ENCODE measurements at regions of chr9 and their contacts with region 1.

Region 1: DNA sequence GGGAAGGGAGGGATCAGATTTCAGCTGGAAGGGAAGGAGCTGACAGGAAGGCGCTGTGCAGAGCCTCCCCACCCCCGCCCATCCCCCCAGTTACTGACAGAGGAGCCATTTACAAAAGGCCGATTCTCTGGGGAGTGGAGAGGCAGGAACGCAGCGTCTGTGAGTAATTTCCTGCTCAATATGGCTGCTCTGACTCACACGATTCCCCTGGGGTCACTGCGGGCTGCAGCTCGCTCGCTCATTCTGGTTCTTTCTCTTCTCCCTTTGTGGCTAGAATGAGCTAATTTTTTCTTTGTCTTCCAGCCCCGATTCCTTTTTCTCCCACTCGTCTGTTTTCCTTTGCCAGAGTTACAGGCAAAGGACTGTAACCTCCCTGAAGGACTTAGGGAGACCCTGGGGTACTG is 28.8 kb downstream of the PTPA start:
- DNase-seq: peak; percentile 70 to 92 (median 73)
- H3K4me3 ChIP-seq: peak overlapping the region; percentile 78 to 82
- H3K4me3 Mint-ChIP-seq: peak overlapping the region; percentile 86 to 95 (median 90)
- H3K27ac ChIP-seq: peak overlapping the region; percentile 90
- H3K27ac Mint-ChIP-seq: peak overlapping the region; percentile 90 to 99 (median 92)
- H3K4me1 ChIP-seq: peaks cover 38% of the 10 kb centered on the region
- H3K4me1 Mint-ChIP-seq: peaks cover 15 to 37% (median 29%) of the 10 kb centered on the region in 4 donors
- H3K27me3 ChIP-seq: no peaks in the 10 kb centered on the region
- H3K27me3 Mint-ChIP-seq: no peaks in the 10 kb centered on the region

Region 2: GRCh38 chr9:128947422-128948301 is 192.3 kb before region 1 on chr9 and contains the starts of genes DOLK and NUP188:
- CTCF ChIA-PET with region 1: no interaction called
- POLR2A ChIA-PET with region 1: no interaction called
- intact Hi-C with region 1: no loop called
- DNase-seq: peak; percentile 96 to 100 (median 97)
- H3K4me3 ChIP-seq: peak within 1 kb of the TSS; percentile 81 to 90
- H3K4me3 Mint-ChIP-seq: peak within 1 kb of the TSS; percentile 94 to 100 (median 98)
- H3K27ac ChIP-seq: peak within 1 kb of the TSS; percentile 87
- H3K27ac Mint-ChIP-seq: peak within 1 kb of the TSS; percentile 93 to 99 (median 98)
- H3K4me1 ChIP-seq: peaks cover 29% of the 10 kb centered on the region
- H3K4me1 Mint-ChIP-seq: peaks cover 16 to 39% (median 27%) of the 10 kb centered on the region in 4 donors
- H3K27me3 ChIP-seq: no peaks in the 10 kb centered on the region
- H3K27me3 Mint-ChIP-seq: no peaks in the 10 kb centered on the region
- total RNA-seq, gene DOLK: 9.9 to 12.9 TPM
- total RNA-seq, gene NUP188: 70.1 to 70.8 TPM

Region 3: GRCh38 chr9:129125476-129125875 is 14.5 kb before region 1 on chr9:
- CTCF ChIA-PET with region 1: interaction called, 127 read pairs
- POLR2A ChIA-PET with region 1: interaction called, 9 read pairs
- intact Hi-C with region 1: no loop called
- DNase-seq: no peak
- H3K4me3 ChIP-seq: no peak overlapping the region
- H3K4me3 Mint-ChIP-seq: no peak overlapping the region
- H3K27ac ChIP-seq: no peak overlapping the region
- H3K27ac Mint-ChIP-seq: no peak overlapping the region
- H3K4me1 ChIP-seq: no peaks in the 10 kb centered on the region
- H3K4me1 Mint-ChIP-seq: peaks cover 0 to 7% (median 0%) of the 10 kb centered on the region in 4 donors
- H3K27me3 ChIP-seq: no peaks in the 10 kb centered on the region
- H3K27me3 Mint-ChIP-seq: no peaks in the 10 kb centered on the region

Region 4: GRCh38 chr9:129166623-129167557 is 26.9 kb after region 1 on chr9:
- CTCF ChIA-PET with region 1: interaction called, 96 read pairs
- POLR2A ChIA-PET with region 1: interaction called, 5 read pairs
- intact Hi-C with region 1: no loop called
- DNase-seq: peak in 1 of 5 donors; percentile 4
- H3K4me3 ChIP-seq: no peak overlapping the region
- H3K4me3 Mint-ChIP-seq: peak overlapping the region in 6 of 8 donors; percentile 43 to 74 (median 67)
- H3K27ac ChIP-seq: no peak overlapping the region
- H3K27ac Mint-ChIP-seq: peak overlapping the region in 3 of 7 donors; percentile 13 to 52 (median 52)
- H3K4me1 ChIP-seq: peaks cover 11% of the 10 kb centered on the region
- H3K4me1 Mint-ChIP-seq: peaks cover 10 to 26% (median 12%) of the 10 kb centered on the region in 4 donors
- H3K27me3 ChIP-seq: no peaks in the 10 kb centered on the region
- H3K27me3 Mint-ChIP-seq: no peaks in the 10 kb centered on the region

Region 5: GRCh38 chr9:129626079-129626624 is 486.2 kb after region 1 on chr9 and contains the start of gene NTMT1:
- CTCF ChIA-PET with region 1: interaction called, 151 read pairs
- POLR2A ChIA-PET with region 1: interaction called, 58 read pairs
- intact Hi-C with region 1: loop called (anchors 1 kb)
- DNase-seq: peak; percentile 88 to 91 (median 90)
- H3K4me3 ChIP-seq: peak within 1 kb of the TSS; percentile 80 to 98
- H3K4me3 Mint-ChIP-seq: peak within 1 kb of the TSS; percentile 84 to 93 (median 89)
- H3K27ac ChIP-seq: peak within 1 kb of the TSS; percentile 91
- H3K27ac Mint-ChIP-seq: peak within 1 kb of the TSS; percentile 89 to 96 (median 95)
- H3K4me1 ChIP-seq: peaks cover 48% of the 10 kb centered on the region
- H3K4me1 Mint-ChIP-seq: peaks cover 27 to 72% (median 53%) of the 10 kb centered on the region in 4 donors
- H3K27me3 ChIP-seq: peaks cover under 1% of the 10 kb centered on the region
- H3K27me3 Mint-ChIP-seq: peaks cover 5 to 14% of the 10 kb centered on the region in 2 donors
- total RNA-seq, gene NTMT1: 45.0 to 45.3 TPM

Region 6: GRCh38 chr9:129823935-129824601 is 684.1 kb after region 1 on chr9 and contains the start of gene TOR1A:
- CTCF ChIA-PET with region 1: no interaction called
- POLR2A ChIA-PET with region 1: no interaction called
- intact Hi-C with region 1: no loop called
- DNase-seq: peak; percentile 89 to 95 (median 90)
- H3K4me3 ChIP-seq: peak within 1 kb of the TSS; percentile 24 to 73
- H3K4me3 Mint-ChIP-seq: peak within 1 kb of the TSS; percentile 84 to 91 (median 88)
- H3K27ac ChIP-seq: peak within 1 kb of the TSS; percentile 62
- H3K27ac Mint-ChIP-seq: peak within 1 kb of the TSS; percentile 73 to 95 (median 88)
- H3K4me1 ChIP-seq: peaks cover 8% of the 10 kb centered on the region
- H3K4me1 Mint-ChIP-seq: peaks cover 8 to 18% (median 13%) of the 10 kb centered on the region in 4 donors
- H3K27me3 ChIP-seq: no peaks in the 10 kb centered on the region
- H3K27me3 Mint-ChIP-seq: no peaks in the 10 kb centered on the region
- total RNA-seq, gene TOR1A: 39.8 to 41.9 TPM